Ascending aorta (tissue), 2 donors: ENCODE measurements at regions of chr6 and their contacts with region 1.

Region 1: DNA sequence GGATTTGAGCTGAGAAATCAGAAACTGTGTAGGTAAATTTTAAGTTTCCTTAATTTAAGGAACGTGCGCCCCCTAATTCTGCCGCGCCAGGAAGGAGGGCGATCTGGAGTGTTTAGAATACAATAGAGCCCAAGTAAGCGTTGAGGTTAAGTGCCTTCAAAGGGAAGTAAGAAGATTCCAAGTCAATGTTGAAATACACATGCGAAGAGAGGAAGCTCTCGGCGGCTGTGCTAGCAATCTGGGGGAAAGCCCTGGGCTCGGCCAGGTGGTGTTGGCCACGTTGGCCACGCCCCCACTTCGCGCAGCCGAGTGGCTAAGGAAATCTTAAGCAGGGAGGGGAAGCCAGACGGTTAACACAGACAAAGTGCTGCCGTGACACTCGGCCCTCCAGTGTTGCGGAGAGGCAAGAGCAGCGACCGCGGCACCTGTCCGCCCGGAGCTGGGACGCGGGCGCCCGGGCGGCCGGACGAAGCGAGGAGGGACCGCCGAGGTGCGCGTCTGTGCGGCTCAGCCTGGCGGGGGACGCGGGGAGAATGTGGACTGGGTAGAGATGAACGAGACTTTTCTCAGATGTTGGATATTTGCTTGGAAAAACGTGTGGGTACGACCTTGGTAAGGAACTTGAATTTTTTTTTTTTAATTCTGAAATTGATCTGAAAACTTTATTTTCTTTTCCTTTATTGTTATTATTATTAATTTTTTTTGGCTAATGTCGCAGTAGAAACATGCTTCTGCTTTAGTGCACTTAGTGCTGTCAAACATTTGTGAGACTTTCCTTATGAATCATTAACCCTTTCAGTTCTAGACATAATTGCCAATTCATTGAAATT is at the start of gene PRDM1:
- DNase-seq: peak; percentile 45 to 88
- H3K4me3 ChIP-seq: peak within 1 kb of the TSS; percentile 53 to 64
- H3K27ac ChIP-seq: peak within 1 kb of the TSS in 1 of 2 donors; percentile 1
- H3K4me1 ChIP-seq: peaks cover 3 to 6% of the 10 kb centered on the region in 2 donors
- H3K27me3 ChIP-seq: no peaks in the 10 kb centered on the region
- CTCF ChIP-seq: no peak
- total RNA-seq, gene PRDM1: 0.21 TPM

Region 2: GRCh38 chr6:105484238-105485161 is 601.7 kb before region 1 on chr6:
- intact Hi-C with region 1: loop called (anchors 10 kb)
- DNase-seq: no peak
- H3K4me3 ChIP-seq: no peak overlapping the region
- H3K27ac ChIP-seq: no peak overlapping the region
- H3K4me1 ChIP-seq: no peaks in the 10 kb centered on the region
- H3K27me3 ChIP-seq: no peaks in the 10 kb centered on the region
- CTCF ChIP-seq: peak; percentile 59 to 92 (median 87)

Region 3: GRCh38 chr6:105992315-105992961 is 93.8 kb before region 1 on chr6:
- intact Hi-C with region 1: loop called (anchors 5 kb)
- DNase-seq: peak in 1 of 2 donors; percentile 83
- H3K4me3 ChIP-seq: peak overlapping the region; percentile 71 to 77
- H3K27ac ChIP-seq: no peak overlapping the region
- H3K4me1 ChIP-seq: peaks cover 3 to 4% of the 10 kb centered on the region in 2 donors
- H3K27me3 ChIP-seq: peaks cover 17% of the 10 kb centered on the region
- CTCF ChIP-seq: no peak